Cardiac septum (tissue), 1 donor: ENCODE measurements at regions of chrX and their contacts with region 1.

Region 1: DNA sequence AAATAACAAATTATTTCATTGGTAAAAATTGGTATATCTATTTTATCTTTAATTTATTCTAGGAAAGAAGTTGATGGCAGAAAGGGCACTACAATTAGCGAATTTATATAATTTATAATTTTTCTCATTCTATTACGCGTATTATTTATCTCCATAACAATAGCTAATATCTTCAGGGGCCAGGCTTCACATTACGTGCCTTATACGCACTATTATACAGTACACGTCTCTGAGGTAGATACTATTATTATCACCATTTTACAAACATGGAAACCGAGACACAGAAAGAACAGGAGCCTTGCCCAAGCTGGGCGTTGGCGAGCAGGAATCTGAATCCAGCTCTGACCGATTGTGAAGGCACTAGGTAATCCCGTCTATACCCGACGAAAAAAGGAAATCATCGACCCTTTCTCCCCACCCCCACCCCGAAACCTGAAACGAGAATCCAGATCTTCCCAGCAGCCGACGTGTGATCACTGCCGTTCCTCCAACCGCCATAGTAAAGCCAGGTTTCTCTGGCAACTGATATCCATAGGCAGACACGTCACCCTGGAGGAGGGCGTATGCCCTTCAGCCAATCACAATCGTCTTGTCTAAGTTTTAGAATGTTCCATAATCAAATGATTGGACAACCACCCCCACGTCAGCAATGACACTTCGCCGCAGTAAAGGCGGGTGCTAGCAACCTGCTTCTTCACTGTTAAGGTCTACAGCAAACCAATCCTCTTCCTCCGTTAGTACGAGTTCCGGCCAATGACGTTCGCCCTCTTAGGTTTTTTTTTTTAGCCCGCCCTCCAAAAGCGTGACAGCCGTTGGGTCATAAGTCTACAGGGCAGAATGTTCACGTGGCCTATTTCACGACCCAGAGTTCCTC is at the start of gene MORF4L2:
- DNase-seq: peak; percentile 93
- total RNA-seq, gene MORF4L2: 171 TPM

Region 2: GRCh38 chrX:102899940-102900916 is 786.2 kb before region 1 on chrX:
- intact Hi-C with region 1: no loop called
- DNase-seq: no peak

Region 3: GRCh38 chrX:103615781-103616371 is 70.6 kb before region 1 on chrX:
- intact Hi-C with region 1: no loop called
- DNase-seq: no peak

Region 4: GRCh38 chrX:103629318-103630170 is 56.9 kb before region 1 on chrX:
- intact Hi-C with region 1: loop called (anchors 2 kb)
- DNase-seq: peak; percentile 82

Region 5: DNA sequence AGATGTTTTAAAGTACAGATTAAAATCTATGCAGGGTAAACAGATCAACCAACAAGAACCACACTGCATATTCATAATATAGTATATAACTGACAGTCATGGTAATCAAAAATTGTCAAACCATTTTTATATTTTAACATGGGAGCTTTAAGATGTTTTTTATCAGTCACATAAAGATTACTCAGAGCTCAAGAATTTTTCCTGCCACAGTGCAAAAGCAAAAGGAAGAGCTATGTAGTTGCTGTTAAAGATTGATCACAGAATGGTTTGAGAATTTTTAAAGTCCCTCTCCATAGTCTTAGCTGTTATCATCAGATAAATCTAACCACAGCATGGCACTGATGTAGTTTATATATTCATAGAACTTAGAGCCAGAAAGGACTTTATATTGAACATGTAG is 137.2 kb after region 1 on chrX:
- intact Hi-C with region 1: loop called (anchors 5 kb)
- DNase-seq: no peak